Left cardiac atrium (tissue), 4 donors: ENCODE measurements at regions of chr11 and their contacts with region 1.

Region 1: DNA sequence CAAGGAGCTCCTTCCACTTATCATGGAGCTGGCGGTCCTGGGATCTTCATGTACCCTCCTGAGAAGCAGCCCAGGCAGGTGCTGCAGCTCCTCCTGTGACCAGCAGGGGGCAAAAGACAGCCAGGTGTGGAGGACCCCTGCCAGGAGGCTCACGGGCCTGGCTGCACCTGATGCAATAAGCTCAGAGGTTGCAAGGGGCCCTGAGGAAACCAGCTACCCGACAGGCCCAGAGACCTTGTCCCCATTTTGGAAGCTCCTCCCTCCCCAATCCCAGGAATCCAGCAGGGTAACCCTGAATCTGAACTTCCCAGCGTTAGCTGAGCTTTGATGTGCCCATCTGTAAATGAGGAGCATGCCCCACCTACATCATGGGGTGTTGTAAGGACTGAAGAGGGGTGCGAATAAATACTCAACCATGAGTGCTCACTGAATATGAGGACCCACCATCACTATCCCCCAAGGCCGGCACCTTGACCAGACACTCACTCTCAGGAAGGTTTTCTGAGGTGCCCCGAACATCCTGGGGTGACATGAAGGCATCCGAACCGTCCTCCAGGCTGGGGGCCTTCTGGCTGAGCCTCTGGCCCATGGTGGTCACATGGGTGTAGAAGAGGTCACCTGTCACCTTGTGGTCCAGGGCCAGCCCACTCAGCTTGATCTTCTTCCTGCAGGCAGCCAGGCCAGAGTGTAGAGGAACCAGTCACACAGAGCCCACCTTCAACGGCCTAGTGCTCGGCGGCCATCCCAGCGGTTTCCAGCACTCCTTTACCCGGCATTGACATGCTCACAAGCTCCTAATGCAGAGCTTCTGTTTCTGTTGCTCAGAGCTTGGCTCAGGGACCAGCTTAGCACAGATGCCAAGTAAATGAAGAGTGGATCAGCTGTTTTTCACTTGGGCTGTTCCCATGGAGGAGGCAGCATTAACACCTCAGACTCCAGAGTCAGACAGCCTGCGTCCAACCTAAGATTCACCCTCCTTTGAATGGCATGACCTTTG is 21.7 kb downstream of the SLC43A1 start:
- DNase-seq: peak; percentile 60
- ATAC-seq: peak; percentile 60 to 75

Region 2: GRCh38 chr11:57444362-57445121 is 49.3 kb before region 1 on chr11:
- intact Hi-C with region 1: no loop called
- DNase-seq: no peak
- ATAC-seq: no peak

Region 3: DNA sequence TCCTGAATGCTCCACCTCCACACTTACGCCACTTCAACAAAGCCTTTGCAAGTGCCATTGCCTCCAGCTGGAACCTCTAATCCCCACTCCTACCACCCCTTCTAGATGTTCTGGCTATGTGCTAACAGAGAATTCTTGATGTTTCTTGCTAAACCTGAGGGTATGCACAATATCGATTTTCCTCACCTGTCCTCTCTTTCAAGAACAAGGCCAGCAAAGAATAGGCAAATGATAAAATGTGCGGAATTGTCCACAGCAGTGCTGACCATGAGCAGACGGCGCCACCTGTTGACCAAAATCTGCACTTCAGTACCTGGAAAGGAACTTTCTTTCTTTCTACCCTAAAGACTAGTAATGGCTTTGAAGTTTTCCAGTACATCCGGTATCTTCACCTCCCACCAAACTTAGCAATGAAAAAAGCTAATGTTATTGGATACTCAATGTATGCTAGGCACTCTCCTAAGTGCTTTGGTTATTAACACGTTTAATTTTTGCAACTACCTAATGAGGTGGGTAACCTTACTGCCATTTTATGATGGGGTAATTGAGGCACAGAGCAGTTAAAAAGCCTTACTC is 33.3 kb after region 1 on chr11:
- intact Hi-C with region 1: loop called (anchors 1 to 2 kb)
- DNase-seq: peak; percentile 75
- ATAC-seq: peak; percentile 10 to 18

Region 4: GRCh38 chr11:57546869-57547475 is 53.2 kb after region 1 on chr11:
- intact Hi-C with region 1: no loop called
- DNase-seq: no peak
- ATAC-seq: peak; percentile 9 to 55

Region 5: DNA sequence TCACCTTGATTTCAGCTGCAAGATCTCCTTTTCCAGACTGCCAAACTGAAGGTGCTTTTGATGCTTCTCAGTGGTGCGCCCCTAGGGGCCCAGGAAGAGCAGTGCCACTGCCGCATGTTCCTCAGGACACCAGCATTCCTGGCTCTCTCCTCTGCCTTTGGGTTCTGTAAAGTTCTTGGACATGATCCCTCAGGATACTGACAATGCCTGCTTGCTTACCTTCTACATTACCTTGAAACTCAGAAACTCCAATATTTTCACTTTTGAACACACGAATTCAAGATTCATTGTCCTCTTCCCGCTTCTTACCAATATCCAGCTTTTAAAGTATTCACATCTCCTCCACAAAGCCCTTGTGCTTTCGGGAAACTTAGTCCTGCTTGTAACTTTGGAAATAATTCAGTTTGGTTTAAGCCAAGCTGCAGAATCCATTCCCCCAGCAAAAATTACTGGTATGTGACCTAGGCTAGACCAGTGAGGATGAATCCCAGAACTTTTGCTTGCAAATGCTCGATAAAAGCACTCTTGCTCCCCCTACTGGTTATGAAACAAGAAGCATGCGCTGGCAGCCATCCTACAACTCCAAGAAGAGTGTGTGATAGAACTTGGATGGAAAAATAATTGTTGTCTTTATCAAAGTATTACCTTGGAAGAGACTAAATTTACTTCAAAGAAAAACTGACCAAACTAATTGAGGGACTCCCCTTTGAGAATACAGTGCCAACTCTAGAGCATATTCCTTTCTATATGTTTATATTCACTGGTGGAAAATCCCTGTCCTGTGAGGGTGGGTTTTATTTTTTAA is 1030.6 kb after region 1 on chr11:
- intact Hi-C with region 1: no loop called
- DNase-seq: peak; percentile 44
- ATAC-seq: peak; percentile 83 to 92